Dendritic cell treated with granulocyte-macrophage colony-stimulating factor and Interleukin-4, amounts not matched to agents 40 ng/mL and 50 ng/mL, for 4 days (primary cell): ENCODE measurements at regions of chr1 and their contacts with region 1.

Region 1: DNA sequence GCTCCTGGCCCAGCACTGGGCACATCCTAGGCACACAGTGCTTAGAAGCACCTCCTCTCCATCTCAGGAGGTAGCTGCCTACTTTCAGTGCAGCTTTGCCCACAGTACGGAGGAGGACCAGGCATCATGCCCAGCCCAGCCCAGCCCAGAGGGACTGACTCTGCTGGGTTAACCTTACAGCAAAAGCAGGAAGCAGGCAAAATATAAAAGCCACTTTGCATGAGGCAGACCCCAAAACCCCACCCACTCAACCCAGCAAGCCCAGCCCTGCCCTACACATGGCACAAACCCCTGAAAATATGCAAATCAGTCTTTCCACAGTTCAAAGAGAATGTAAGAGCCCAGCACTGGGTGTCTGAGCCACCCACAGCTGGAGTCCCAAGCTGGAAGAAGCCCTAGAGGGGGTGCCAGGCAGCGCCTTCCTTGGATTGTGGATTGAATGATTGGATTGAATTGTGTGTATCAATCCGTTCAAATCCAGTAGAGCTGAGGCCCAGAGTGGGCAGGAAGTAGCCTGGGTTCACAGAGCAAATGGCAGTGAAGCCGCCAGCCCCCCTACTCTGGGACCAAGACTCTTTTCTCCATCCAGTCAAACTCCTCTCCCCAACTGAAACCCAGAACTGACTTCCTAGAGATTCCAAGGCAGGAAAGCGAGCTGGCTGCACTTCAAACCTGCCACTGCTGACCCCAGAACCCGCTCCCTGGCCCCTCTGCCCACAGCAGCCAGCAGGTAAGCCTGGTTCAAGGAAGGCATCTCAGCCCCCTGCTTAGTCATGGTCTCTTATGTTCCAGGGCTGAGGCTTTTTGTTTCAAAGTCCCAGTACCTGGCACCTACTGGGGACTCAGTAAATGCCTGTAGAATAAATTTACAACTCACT is 117.7 kb downstream of the LACTBL1 start:
- H3K4me3 Mint-ChIP-seq: no peak overlapping the region
- H3K27ac Mint-ChIP-seq: no peak overlapping the region
- H3K4me1 Mint-ChIP-seq: peaks cover 51% of the 10 kb centered on the region
- H3K27me3 Mint-ChIP-seq: peaks cover 28% of the 10 kb centered on the region

Region 2: GRCh38 chr1:22821012-22821411 is 33.9 kb before region 1 on chr1:
- intact Hi-C with region 1: loop called (anchors 5 kb)
- H3K4me3 Mint-ChIP-seq: no peak overlapping the region
- H3K27ac Mint-ChIP-seq: no peak overlapping the region
- H3K4me1 Mint-ChIP-seq: peaks cover 16% of the 10 kb centered on the region
- H3K27me3 Mint-ChIP-seq: peaks cover 13% of the 10 kb centered on the region

Region 3: DNA sequence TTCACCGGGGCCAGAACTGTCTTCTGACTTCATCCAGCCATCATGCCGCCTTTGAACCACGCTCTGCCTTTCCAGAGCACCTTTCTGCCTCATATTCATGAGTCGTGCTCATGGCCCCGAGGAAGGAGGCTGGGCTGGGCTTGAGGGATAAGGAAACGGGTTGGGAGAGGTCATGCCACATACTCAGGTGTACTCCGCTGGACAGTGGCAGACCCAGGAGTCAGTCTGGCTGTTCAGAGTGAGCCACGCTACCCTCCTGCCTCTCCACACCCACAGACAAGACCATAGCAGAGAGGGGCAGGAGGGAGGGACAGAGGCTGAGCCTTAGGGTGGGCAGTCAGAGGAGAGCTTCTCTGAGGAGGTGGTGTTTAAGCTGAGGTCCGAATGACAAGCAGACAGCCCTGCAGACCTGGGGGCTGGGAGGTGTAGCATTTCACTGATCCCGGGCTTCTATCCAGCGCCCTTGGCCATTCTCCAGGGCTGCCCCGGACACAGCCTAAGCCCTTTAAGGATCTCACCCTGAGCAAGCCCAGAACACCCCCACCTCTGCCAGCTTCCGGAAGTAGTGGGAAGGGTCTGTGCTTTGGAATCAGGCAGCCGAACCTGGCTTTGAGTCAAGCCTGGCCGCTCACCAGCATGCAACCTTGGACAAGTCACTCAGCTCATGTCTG is 15.4 kb after region 1 on chr1:
- intact Hi-C with region 1: no loop called
- H3K4me3 Mint-ChIP-seq: no peak overlapping the region
- H3K27ac Mint-ChIP-seq: no peak overlapping the region
- H3K4me1 Mint-ChIP-seq: peaks cover 18% of the 10 kb centered on the region
- H3K27me3 Mint-ChIP-seq: peaks cover 12% of the 10 kb centered on the region